A549 (cell line): ENCODE measurements at regions of chr17 and their contacts with region 1.

Region 1: GRCh38 chr17:29617125-29617480 is 5.6 kb downstream of the CORO6 start:
- DNase-seq: peak; percentile 84 to 88
- ATAC-seq: peak; percentile 19 to 67; a peak in 3 of 6 replicates
- H3K4me3 ChIP-seq: peak overlapping the region; percentile 23; the same call in 1 of the 3 replicates
- H3K27ac ChIP-seq: peak overlapping the region in 1 of 2 experiments; percentile 82; a peak in 4 of 6 replicates
- H3K4me1 ChIP-seq: peaks cover 56% of the 10 kb centered on the region
- CTCF ChIP-seq: peak; percentile 58
- EP300 ChIP-seq: no peak
- POLR2A ChIP-seq: peak; percentile 21; the same call in 1 of the 2 replicates
- RAD21 ChIP-seq: peak in 1 of 2 experiments; percentile 23; a peak in 1 of 5 replicates

Region 2: GRCh38 chr17:29514792-29515191 is 102.3 kb before region 1 on chr17:
- CTCF ChIA-PET with region 1: no interaction called
- POLR2A ChIA-PET with region 1: interaction called, 10 read pairs
- DNase-seq: no peak
- ATAC-seq: no peak
- H3K4me3 ChIP-seq: no peak overlapping the region
- H3K27ac ChIP-seq: no peak overlapping the region
- H3K4me1 ChIP-seq: no peaks in the 10 kb centered on the region
- CTCF ChIP-seq: no peak
- EP300 ChIP-seq: no peak
- POLR2A ChIP-seq: no peak
- RAD21 ChIP-seq: no peak

Region 3: GRCh38 chr17:29579866-29580771 is 37.0 kb before region 1 on chr17:
- CTCF ChIA-PET with region 1: interaction called, 447 read pairs
- POLR2A ChIA-PET with region 1: no interaction called
- DNase-seq: peak; percentile 91 to 99
- ATAC-seq: peak; percentile 87 to 96
- H3K4me3 ChIP-seq: no peak overlapping the region
- H3K27ac ChIP-seq: peak overlapping the region; percentile 41 to 72; a peak in 5 of 6 replicates
- H3K4me1 ChIP-seq: peaks cover 26% of the 10 kb centered on the region
- CTCF ChIP-seq: peak; percentile 98
- EP300 ChIP-seq: no peak
- POLR2A ChIP-seq: no peak
- RAD21 ChIP-seq: peak; percentile 95

Region 4: DNA sequence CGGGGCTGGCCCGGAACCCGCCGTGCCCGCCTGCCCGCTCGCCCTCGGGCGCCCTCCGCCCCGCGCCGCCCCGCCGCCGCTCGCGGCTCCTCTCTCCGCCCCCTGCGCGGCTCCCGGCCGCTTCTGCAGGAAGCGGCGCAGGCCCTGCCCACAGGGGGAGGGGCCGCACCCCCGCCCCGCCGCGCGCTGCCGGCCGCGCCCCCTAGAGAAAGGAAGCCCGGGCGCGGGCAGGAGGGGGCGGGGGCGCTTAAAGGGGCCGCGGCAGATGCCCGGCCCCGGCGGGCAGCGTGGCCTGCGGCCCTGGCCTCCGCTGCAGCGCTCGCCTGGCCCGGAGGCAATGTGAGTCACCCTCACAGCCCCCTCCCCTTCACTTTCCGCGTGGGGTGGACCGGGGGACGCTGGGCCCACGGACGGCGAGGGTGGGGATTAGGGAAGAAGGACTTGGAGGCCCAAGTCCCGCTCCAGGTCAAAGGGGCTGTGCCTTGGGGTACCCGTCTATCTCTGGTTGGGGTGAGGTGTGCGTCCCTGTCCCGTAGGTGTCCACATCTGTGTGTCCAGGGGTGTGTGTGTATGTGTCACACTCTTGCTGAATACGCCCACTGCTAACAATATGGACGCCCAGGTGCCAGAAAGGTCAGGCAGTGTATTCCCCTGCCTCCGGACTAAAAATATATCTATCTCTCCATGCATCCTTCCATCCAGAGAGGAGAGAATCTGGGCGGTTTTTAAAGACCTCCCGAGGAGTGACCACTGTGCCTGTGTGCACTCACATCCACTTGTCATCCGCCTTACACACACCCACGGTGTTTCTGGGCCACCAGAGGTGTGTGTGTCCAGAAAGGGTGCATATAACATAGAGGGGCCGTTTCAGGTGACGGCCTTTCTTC is 27.3 kb before region 1 on chr17 and contains the start of gene GIT1:
- CTCF ChIA-PET with region 1: interaction called, 447 read pairs
- POLR2A ChIA-PET with region 1: interaction called, 15 read pairs
- DNase-seq: peak; percentile 85 to 92
- ATAC-seq: peak; percentile 21 to 40
- H3K4me3 ChIP-seq: peak within 1 kb of the TSS; percentile 82
- H3K27ac ChIP-seq: peak within 1 kb of the TSS; percentile 95 to 96
- H3K4me1 ChIP-seq: peaks cover 56% of the 10 kb centered on the region
- CTCF ChIP-seq: no peak
- EP300 ChIP-seq: no peak
- POLR2A ChIP-seq: peak; percentile 63
- RAD21 ChIP-seq: no peak
- polyA plus RNA-seq, gene GIT1: 53.0 and 56.8 TPM in 2 replicates

Region 5: GRCh38 chr17:29628644-29629043 is 11.5 kb after region 1 on chr17:
- CTCF ChIA-PET with region 1: interaction called, 52 read pairs
- POLR2A ChIA-PET with region 1: interaction called, 4 read pairs
- DNase-seq: no peak
- ATAC-seq: no peak
- H3K4me3 ChIP-seq: no peak overlapping the region
- H3K27ac ChIP-seq: no peak overlapping the region
- H3K4me1 ChIP-seq: no peaks in the 10 kb centered on the region
- CTCF ChIP-seq: no peak
- EP300 ChIP-seq: no peak
- POLR2A ChIP-seq: no peak
- RAD21 ChIP-seq: no peak

Region 6: DNA sequence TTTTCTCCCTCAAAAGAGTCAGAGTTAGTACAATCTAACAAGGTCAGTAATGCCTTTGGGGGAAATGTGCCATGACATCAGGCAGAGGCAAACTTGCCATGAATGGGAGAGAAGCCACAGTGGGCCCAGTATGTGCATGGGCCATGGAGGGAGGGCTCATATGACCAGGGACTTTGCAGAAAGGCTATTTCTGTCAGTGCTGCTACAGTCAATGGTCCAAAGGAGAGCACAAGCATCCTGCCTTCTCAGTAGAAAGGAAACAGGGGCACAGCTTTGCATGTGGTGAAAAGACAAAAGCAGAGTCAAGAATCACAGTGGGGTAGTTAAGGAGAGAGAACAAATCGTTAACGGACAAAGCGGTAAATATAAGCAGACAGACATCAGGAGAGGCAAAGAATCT is 16.8 kb after region 1 on chr17:
- CTCF ChIA-PET with region 1: interaction called, 52 read pairs
- POLR2A ChIA-PET with region 1: interaction called, 8 read pairs
- DNase-seq: no peak
- ATAC-seq: no peak
- H3K4me3 ChIP-seq: no peak overlapping the region
- H3K27ac ChIP-seq: no peak overlapping the region
- H3K4me1 ChIP-seq: peaks cover 5% of the 10 kb centered on the region
- CTCF ChIP-seq: no peak
- EP300 ChIP-seq: no peak
- POLR2A ChIP-seq: no peak
- RAD21 ChIP-seq: no peak

Region 7: DNA sequence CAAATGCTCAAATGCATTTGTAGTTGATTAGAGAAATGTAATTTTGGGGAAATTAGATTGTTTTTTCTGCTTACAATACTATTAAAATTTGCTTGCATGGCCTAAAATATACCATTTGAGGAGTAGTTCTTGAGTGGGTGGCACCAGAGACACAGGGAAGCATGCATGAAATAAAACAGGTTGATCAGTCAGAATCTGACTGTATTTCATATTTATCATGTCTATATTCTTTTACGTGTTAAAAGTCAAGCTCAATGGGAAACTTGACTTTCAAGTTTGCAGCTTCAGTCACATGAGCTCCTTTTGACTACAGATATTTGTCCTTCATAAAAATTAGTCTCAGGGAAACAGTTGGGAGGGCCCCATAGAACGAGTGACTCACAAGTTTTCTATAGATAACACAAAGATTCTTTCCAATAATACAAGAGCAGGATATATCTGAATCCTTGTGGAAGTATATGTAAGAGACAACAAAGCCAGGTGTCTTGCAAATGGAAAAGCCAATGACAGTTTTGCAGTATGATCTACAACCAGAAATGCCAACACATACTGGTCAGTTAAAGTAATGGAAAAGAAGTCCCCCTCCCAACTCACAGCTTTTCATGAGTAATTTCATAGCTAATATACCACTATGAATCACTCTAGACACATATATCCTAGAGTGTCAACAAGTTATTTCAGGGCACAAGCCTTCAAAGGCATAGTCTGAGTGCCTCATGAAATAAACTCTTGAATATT is 47.8 kb after region 1 on chr17:
- CTCF ChIA-PET with region 1: interaction called, 10 read pairs
- POLR2A ChIA-PET with region 1: no interaction called
- DNase-seq: peak; percentile 22 to 29
- ATAC-seq: peak in 1 of 2 experiments; percentile 75; a peak in 3 of 6 replicates
- H3K4me3 ChIP-seq: no peak overlapping the region
- H3K27ac ChIP-seq: 0 out of 6 replicates have a peak overlapping the region, but pooled peaks of 1 of the 2 experiments have one; percentile 12
- H3K4me1 ChIP-seq: peaks cover 30% of the 10 kb centered on the region
- CTCF ChIP-seq: no peak
- EP300 ChIP-seq: no peak
- POLR2A ChIP-seq: no peak
- RAD21 ChIP-seq: no peak